ENCODE measurements at regions of chr6 and their contacts with region 1.

Region 1: DNA sequence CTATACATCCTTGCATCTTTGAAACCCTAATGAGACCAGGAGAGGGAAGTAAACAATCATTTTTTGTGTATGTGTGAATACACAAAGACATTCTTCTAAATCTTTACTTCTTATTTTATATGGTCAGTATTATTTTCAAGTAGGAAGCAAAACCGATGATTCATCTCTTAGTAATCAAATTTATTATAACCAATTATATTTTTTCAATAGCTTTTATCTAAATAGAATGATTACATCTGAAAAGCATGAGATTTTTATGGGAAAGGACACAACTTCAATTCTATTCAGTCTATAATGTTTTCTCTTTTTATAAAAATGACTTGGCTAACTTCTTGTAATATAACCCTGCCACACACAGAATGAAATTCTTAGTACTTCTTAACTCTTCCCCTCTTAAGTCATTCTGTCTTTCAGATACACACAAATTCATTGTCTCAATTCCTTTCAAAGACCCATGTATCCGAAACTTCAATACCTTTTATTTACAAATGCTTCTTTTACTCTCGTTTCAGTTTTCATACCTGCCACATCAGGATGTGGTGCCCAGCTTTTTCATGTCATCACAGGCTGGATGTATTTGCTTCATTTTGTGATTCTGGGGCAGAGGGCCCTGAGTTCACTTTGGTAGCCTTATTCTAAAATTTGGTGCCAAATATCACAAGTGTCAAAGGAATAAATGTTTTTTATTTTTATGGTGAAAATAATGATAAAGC is 227.0 kb downstream of the PHF3 start:
- DNase-seq: no peak
- H3K4me3 ChIP-seq: no peak overlapping the region
- H3K27ac ChIP-seq: no peak overlapping the region
- H3K4me1 ChIP-seq: no peaks in the 10 kb centered on the region
- CTCF ChIP-seq: no peak

Region 2: DNA sequence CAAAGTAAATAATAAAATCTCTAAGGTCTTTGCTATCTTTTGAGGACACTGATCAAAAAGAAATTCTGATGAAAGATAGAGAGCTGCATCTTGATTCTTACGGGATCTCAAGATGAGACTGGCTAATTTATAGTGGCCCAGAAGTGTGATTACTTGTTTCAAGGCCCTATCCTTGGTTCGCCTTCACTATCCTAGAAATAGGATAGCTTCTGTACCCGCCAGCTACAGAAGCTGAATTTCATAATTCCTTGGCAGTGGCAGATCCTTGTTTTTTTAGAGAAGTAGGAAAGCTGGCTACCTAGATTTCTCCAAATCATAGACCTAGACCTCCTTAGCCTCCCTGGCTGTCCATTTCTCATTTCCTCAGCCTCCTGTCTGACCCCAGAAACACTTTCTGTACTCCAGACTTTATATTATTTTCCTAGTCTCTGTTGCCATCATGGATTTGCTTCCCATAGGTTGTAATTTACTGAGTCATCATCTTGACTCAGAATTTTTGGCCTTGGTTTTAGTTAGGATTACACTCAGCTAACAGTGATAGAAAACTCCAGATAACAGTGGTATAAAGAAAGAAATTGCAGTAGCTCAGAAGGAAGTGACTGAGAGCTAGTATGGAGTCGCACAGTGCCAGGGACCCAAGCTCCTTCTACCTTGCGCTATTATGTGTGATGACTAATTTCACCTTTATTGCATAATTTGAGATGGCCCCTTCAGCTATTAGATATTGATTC is 199.3 kb before region 1 on chr6:
- CTCF ChIA-PET with region 1: no interaction called
- POLR2A ChIA-PET with region 1: no interaction called
- intact Hi-C with region 1: no loop called
- DNase-seq: no peak
- H3K4me3 ChIP-seq: no peak overlapping the region
- H3K27ac ChIP-seq: peak overlapping the region; percentile 39
- H3K4me1 ChIP-seq: peaks cover 75% of the 10 kb centered on the region
- CTCF ChIP-seq: no peak

Region 3: GRCh38 chr6:63740709-63741108 is 121.9 kb before region 1 on chr6:
- CTCF ChIA-PET with region 1: no interaction called
- POLR2A ChIA-PET with region 1: no interaction called
- intact Hi-C with region 1: no loop called
- DNase-seq: no peak
- H3K4me3 ChIP-seq: no peak overlapping the region
- H3K27ac ChIP-seq: no peak overlapping the region
- H3K4me1 ChIP-seq: no peaks in the 10 kb centered on the region
- CTCF ChIP-seq: no peak

Region 4: GRCh38 chr6:63844287-63844686 is 18.4 kb before region 1 on chr6:
- CTCF ChIA-PET with region 1: no interaction called
- POLR2A ChIA-PET with region 1: interaction called, 11 read pairs
- intact Hi-C with region 1: no loop called
- DNase-seq: no peak
- H3K4me3 ChIP-seq: no peak overlapping the region
- H3K27ac ChIP-seq: no peak overlapping the region
- H3K4me1 ChIP-seq: no peaks in the 10 kb centered on the region
- CTCF ChIP-seq: no peak

Region 5: DNA sequence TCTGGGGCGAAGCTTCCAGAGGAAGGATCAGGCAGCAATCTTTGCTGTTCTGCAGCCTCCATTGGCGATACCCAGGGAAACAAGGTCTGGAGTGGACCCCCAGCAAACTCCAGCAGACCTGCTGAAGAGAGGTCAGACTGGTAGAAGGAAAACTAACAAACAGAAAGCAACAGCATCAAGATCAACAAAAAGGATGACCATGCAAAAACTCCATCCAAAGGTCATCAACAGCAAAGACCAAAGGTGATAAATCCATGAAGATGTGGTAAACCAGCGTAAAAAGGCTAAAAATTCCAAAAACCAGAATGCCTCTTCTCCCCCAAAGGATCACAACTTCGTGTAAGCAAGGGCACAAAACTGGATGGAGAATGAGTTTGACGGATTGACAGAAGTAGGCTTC is 25.8 kb after region 1 on chr6:
- CTCF ChIA-PET with region 1: no interaction called
- POLR2A ChIA-PET with region 1: no interaction called
- intact Hi-C with region 1: no loop called
- DNase-seq: no peak
- H3K4me3 ChIP-seq: no peak overlapping the region
- H3K27ac ChIP-seq: no peak overlapping the region
- H3K4me1 ChIP-seq: no peaks in the 10 kb centered on the region
- CTCF ChIP-seq: no peak

Measured in OCI-LY7 (cell line).